ENCODE measurements at regions of chr1 and their contacts with region 1.

Region 1: GRCh38 chr1:195939844-195940243 is 668.4 kb downstream of the KCNT2 start:
- DNase-seq: peak; percentile 51
- H3K4me3 Mint-ChIP-seq: no peak overlapping the region
- H3K27ac Mint-ChIP-seq: no peak overlapping the region
- H3K4me1 Mint-ChIP-seq: no peaks in the 10 kb centered on the region
- H3K27me3 Mint-ChIP-seq: no peaks in the 10 kb centered on the region
- CTCF ChIP-seq: peak; percentile 39

Region 2: GRCh38 chr1:195866781-195867222 is 73.0 kb before region 1 on chr1:
- CTCF ChIA-PET with region 1: no interaction called
- POLR2A ChIA-PET with region 1: no interaction called
- intact Hi-C with region 1: no loop called
- DNase-seq: no peak
- H3K4me3 Mint-ChIP-seq: no peak overlapping the region
- H3K27ac Mint-ChIP-seq: peak overlapping the region; percentile 3
- H3K4me1 Mint-ChIP-seq: peaks cover 10% of the 10 kb centered on the region
- H3K27me3 Mint-ChIP-seq: no peaks in the 10 kb centered on the region
- CTCF ChIP-seq: no peak

Region 3: DNA sequence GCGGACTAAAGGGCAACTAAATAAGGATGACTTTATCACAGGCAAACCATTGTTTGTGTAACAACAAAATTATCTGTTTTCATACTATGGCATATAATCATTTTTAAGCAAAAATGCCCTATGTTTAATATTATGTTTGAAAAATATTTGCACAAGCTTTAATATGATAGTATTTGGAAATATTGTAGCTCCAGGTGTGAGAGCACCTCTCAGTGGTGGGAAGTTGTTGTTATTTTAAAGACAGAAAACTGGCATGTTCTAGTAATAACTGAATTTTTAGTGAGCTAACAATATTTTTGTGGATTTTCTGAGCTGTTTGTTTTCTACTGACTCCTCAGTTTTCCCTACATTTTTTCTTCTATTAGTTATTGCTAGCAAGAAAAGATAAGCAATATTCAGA is 89.6 kb after region 1 on chr1:
- CTCF ChIA-PET with region 1: interaction called, 15 read pairs
- POLR2A ChIA-PET with region 1: interaction called, 3 read pairs
- intact Hi-C with region 1: no loop called
- DNase-seq: no peak
- H3K4me3 Mint-ChIP-seq: no peak overlapping the region
- H3K27ac Mint-ChIP-seq: no peak overlapping the region
- H3K4me1 Mint-ChIP-seq: no peaks in the 10 kb centered on the region
- H3K27me3 Mint-ChIP-seq: no peaks in the 10 kb centered on the region
- CTCF ChIP-seq: peak; percentile 11

Region 4: DNA sequence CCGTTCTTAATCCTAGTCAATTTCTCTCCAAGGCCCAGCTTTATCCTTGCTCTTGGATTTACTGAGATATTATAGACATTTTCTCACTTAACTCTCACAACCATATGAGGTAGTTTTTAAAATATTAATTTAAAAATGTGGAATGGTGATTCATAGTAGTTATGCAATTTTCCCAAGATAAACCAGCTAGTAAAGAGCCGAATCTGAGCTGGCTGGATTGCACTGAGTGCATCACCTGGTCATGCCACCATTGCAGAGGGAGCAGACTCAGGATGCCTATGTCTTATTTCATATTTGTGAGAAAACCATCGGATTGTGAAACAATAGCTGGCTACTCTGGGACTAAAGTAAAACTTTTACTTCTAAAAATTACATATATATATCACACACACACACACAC is 174.3 kb after region 1 on chr1:
- CTCF ChIA-PET with region 1: no interaction called
- POLR2A ChIA-PET with region 1: no interaction called
- intact Hi-C with region 1: no loop called
- DNase-seq: peak; percentile 69
- H3K4me3 Mint-ChIP-seq: no peak overlapping the region
- H3K27ac Mint-ChIP-seq: peak overlapping the region; percentile 69
- H3K4me1 Mint-ChIP-seq: peaks cover 17% of the 10 kb centered on the region
- H3K27me3 Mint-ChIP-seq: no peaks in the 10 kb centered on the region
- CTCF ChIP-seq: no peak

Region 5: DNA sequence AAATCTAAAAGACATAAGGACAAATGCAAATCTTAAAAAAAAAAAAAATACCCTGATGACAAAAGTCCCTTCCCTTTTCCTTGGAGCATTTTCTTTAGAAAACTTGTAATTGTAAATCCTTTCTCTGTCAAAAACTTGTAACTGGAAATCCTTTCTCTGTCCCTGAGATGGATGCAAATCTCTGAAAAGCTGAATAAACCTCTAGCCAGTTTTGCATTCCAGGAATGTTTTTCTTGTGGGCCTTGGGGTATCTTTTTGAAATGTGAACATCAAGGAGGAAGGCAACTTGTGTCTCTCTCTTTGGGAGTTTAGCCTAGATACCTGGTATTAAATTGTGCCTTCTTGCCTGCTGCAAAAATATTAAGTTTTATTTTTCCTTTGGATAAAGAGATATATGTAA is 363.1 kb after region 1 on chr1:
- CTCF ChIA-PET with region 1: interaction called, 14 read pairs
- POLR2A ChIA-PET with region 1: no interaction called
- intact Hi-C with region 1: no loop called
- DNase-seq: no peak
- H3K4me3 Mint-ChIP-seq: no peak overlapping the region
- H3K27ac Mint-ChIP-seq: no peak overlapping the region
- H3K4me1 Mint-ChIP-seq: no peaks in the 10 kb centered on the region
- H3K27me3 Mint-ChIP-seq: no peaks in the 10 kb centered on the region
- CTCF ChIP-seq: no peak

Region 6: DNA sequence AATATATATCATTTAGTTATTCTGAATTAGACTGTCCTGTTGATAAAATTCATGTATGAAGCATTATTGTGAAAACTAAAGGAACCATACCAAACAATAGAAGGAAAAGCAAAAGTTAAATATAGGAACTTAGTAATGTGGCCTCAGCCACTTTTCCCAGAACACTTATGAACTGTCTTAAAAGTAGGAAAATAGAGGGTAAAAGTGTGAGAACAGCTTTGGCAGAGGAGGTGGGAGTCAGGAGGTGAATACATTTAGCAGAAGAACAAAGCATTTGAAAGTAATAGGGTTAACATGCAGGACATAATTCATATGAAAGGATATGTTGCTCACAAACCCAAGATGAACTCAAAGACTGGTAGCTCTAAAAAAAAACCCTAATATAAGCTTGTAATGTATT is 546.5 kb after region 1 on chr1:
- CTCF ChIA-PET with region 1: no interaction called
- POLR2A ChIA-PET with region 1: no interaction called
- intact Hi-C with region 1: no loop called
- DNase-seq: no peak
- H3K4me3 Mint-ChIP-seq: no peak overlapping the region
- H3K27ac Mint-ChIP-seq: no peak overlapping the region
- H3K4me1 Mint-ChIP-seq: peaks cover 9% of the 10 kb centered on the region
- H3K27me3 Mint-ChIP-seq: no peaks in the 10 kb centered on the region
- CTCF ChIP-seq: no peak